ENCODE measurements at regions of chr7 and their contacts with region 1.

Region 1: GRCh38 chr7:29968683-29969395 is 20.8 kb downstream of the SCRN1 start:
- DNase-seq: peak; percentile 28
- H3K4me3 ChIP-seq: no peak overlapping the region
- CTCF ChIP-seq: no peak

Region 2: DNA sequence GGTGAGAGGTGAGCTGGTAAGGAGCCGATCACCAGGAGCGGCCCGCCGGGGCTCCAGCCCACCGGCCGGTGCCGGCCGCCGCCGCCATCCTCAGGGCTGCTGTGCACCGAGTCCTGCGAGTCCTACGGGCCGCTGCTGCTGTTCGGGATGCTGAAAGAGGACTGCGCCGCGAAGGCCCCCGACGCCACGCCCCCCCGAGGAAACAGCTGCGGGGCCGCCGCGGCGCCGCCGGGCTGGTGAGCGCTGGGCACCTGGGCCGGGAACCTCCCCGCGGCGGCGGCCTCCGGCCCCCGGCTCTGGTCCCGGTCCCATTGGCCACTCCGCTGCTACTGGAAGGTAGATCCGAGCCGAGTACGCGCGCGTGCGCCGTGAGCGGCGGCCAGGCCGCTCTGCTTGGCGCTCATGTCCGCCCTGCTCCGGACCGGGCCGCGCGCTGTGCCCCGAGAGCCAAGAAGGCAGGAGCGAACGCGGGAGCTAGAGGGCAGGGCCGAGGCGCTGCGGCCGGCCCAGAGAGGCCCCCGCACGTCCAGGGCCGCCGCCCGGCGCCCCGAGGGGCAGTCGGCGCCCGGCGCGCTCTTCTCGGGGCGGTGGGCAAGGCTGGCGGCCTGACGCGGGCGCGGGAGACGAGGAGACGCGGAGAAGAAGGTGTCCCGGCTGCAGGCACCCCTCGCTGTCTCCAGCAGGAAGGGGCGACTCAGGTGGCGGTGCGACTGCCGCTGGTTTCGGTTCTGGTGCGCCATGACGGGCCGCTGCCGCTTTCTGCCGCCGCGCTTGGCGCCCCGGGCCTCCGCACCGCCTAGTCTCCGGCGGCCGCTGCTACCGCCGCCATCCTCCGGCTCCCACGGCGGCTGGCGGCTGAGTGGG is 283.8 kb before region 1 on chr7:
- CTCF ChIA-PET with region 1: no interaction called
- POLR2A ChIA-PET with region 1: no interaction called
- DNase-seq: no peak
- H3K4me3 ChIP-seq: peak overlapping the region; percentile 69
- CTCF ChIP-seq: no peak

Region 3: DNA sequence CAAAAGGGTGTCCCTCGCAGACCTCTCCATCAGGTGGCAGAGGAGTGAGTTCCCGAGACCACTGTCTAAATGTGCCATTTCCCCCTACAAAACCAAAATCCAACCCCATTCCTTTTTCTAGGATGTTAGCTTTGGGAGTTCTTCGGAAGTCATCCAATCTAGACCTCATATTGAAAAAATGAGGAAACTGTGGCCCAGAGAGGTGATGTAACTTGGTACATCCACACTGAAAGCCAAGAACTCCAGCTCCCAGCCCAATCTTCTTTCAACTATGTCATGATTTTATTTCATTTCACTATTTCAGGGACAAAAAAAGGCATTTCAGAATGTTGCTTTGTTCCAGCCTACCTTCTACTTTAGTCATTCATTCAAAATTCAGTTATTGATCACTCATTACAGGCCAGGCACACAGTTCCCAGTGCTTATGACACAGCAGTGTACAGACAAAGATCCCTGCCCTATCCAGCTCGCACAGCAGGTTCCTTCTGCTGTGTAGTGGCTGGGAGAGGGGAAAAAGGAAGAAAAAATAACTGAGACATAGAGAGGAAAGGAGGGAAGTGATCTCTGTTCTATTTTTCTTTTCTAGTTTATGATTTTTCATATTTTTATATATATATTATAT is 15.0 kb before region 1 on chr7:
- CTCF ChIA-PET with region 1: interaction called, 12 read pairs
- POLR2A ChIA-PET with region 1: interaction called, 4 read pairs
- DNase-seq: no peak
- H3K4me3 ChIP-seq: no peak overlapping the region
- CTCF ChIP-seq: no peak

Region 4: DNA sequence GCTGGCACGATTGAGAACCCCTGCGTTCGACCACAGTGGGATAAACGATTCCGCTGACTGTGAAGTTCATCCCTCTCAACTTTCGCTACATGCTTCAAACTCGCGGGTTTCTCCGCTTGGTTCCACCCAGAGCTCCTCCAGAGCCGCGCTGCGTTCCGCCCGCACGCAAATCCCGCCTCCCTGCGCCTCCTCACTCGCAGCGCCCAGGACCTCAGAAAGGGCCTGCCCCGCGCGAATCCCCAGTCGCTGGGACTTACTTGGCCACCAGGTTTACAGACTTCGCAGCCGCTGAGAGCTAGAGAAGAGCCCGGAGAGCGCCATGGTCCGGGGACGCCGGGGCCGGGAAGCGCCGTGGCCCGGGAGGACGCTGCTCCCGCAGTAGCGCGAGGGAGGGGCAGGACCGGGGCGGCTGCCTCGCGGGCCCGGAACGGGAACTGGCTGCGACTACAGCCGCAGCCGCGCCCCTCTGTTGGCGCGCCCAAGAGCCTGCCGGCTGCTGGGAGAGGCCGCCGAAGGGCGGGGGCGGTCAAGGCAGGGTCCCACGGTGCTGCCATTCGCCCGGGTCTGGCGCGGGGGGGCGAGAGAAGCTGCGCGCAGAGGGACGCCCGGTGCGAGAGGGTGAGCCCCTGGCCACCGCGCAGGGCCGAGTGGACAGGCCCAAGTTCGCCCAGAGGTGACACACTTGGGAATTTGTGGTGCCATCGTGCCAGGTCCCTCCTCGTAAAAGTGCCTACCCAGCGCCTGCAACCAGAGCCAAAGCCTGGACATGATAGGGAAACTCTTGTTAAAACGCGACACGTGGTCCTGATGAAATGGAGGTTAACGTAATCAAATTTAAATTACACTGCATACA is 509.7 kb after region 1 on chr7 and contains the start of gene NOD1:
- CTCF ChIA-PET with region 1: no interaction called
- POLR2A ChIA-PET with region 1: no interaction called
- DNase-seq: no peak
- H3K4me3 ChIP-seq: peak within 1 kb of the TSS; percentile 74
- CTCF ChIP-seq: no peak